Gastrocnemius medialis (tissue), 4 donors: ENCODE measurements at regions of chr19 and their contacts with region 1.

Region 1: DNA sequence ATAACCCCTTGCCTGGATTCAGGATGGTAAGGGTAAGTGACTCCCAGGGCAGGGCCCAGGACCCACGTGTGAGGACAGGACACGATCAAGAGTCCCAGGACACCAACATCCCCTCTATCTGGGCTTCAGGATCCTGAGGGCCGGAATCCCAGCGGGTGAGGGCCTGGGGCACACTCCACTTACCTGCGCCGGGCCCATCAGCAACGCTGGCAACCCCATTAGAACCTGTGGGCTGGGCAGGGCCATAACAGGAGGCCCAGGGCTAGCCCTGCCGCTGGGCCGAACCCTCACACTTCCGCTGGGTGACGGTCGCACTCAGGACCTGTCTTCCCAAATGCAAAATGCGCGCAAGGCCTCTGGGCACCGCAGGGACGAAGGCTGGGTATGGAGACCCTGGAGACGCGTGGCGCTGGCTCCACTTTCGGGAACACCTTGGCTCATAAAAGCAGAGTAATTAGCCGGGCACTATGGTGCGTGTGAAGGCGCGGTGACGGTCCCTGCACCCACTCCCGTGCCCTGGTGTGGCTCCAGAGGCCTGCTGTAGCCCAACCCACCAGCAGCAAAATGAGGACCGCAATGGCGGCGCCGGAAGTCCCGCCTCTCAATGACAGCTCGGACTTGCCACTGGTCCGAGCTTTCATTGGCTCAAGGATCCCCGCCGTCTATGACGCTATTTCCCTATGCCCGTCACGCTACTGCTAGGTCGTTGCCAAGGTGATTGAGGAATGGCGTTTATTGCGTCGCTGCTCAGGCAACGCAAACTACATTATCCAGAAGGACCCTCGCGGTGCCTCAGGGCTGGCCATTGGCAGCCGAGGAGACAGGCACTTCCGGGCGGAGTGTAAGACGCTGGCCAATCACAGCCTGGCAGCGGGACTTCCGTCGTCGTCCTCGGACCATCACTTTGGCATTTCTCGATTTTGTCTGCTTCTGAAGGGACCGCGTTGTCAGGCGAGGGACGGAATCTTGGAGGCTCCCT is at the start of gene ZNF132:
- DNase-seq: peak; percentile 98 to 99
- ATAC-seq: peak; percentile 100
- H3K4me3 ChIP-seq: peak within 1 kb of the TSS; percentile 78 to 95 (median 82)
- H3K27ac ChIP-seq: peak within 1 kb of the TSS; percentile 70 to 87 (median 78)
- H3K4me1 ChIP-seq: peaks cover 16 to 17% of the 10 kb centered on the region in 2 donors
- H3K27me3 ChIP-seq: no peaks in the 10 kb centered on the region
- CTCF ChIP-seq: no peak
- POLR2A ChIP-seq: peak; percentile 38 to 44
- total RNA-seq, gene ZNF132: 1.8 to 2.7 (median 2.4) TPM

Region 2: GRCh38 chr19:57613941-57614743 is 825.7 kb before region 1 on chr19 and contains the start of gene ZNF134:
- in situ Hi-C with region 1: no loop called
- intact Hi-C with region 1: loop called (anchors 1 kb)
- DNase-seq: peak; percentile 82 to 86
- ATAC-seq: peak; percentile 98 to 99
- H3K4me3 ChIP-seq: peak within 1 kb of the TSS; percentile 79 to 98 (median 90)
- H3K27ac ChIP-seq: peak within 1 kb of the TSS; percentile 72 to 85 (median 80)
- H3K4me1 ChIP-seq: peaks cover 14 to 16% of the 10 kb centered on the region in 2 donors
- H3K27me3 ChIP-seq: peaks cover 0 to 3% (median 0%) of the 10 kb centered on the region in 3 donors
- CTCF ChIP-seq: peak in 3 of 5 experiments; percentile 21 to 41 (median 25)
- POLR2A ChIP-seq: peak in 1 of 2 donors; percentile 36
- total RNA-seq, gene ZNF134: 4.2 to 13.1 (median 8.0) TPM

Region 3: DNA sequence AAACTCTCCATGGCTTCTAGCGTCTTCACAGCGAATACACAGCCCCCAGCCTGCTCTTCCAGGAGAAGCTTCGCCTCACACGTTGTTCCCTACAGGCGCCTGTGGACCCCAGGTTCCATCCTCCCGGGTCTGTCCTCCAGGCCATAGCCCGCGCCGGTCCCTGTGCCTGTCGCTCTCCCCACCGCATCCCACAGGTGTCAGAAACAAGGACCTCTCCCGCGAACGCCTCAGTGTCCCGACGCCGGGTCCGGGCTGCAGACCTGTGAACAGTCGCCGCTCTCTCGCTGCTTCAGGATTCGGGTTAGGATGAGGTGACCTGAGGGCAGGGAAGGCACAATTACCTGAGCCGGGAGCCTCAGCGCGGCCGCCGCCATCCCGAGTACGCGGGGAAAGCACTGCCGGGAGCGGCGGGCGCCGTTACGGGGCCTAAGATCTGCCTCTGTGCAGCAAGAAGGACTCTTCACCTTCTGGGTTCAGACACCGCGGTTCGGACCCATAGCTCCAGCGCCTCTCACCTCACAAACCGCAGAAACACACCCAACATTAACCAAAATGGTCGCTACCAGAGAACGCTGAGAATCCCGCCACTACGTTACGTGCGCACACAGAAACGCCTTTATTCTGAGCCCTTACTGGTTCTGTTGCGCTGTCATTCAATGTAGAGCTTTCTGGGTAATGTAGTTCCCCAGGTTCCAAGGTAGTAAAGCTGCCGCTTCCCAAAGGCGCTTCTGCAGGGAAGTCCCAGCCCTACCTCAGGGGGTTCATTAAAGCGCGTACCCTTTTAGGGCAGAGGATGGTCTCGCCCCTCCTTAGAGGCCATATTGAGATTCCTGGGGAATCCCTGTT is 504.8 kb before region 1 on chr19 and contains the start of gene ZNF418:
- in situ Hi-C with region 1: no loop called
- intact Hi-C with region 1: no loop called
- DNase-seq: peak; percentile 25 to 48
- ATAC-seq: peak; percentile 99
- H3K4me3 ChIP-seq: peak within 1 kb of the TSS; percentile 70 to 86 (median 76)
- H3K27ac ChIP-seq: peak within 1 kb of the TSS; percentile 51 to 80 (median 74)
- H3K4me1 ChIP-seq: no peaks in the 10 kb centered on the region
- H3K27me3 ChIP-seq: no peaks in the 10 kb centered on the region
- CTCF ChIP-seq: no peak
- POLR2A ChIP-seq: no peak
- total RNA-seq, gene ZNF418: 0.52 to 2.4 (median 0.87) TPM

Region 4: GRCh38 chr19:58326914-58327726 is 112.7 kb before region 1 on chr19 and contains the start of gene ZSCAN22:
- in situ Hi-C with region 1: no loop called
- intact Hi-C with region 1: loop called (anchors 1 kb)
- DNase-seq: peak; percentile 95 to 96
- ATAC-seq: peak; percentile 98
- H3K4me3 ChIP-seq: peak within 1 kb of the TSS; percentile 91 to 96 (median 94)
- H3K27ac ChIP-seq: peak within 1 kb of the TSS; percentile 94 to 99 (median 98)
- H3K4me1 ChIP-seq: peaks cover 24 to 29% of the 10 kb centered on the region in 2 donors
- H3K27me3 ChIP-seq: no peaks in the 10 kb centered on the region
- CTCF ChIP-seq: no peak
- POLR2A ChIP-seq: peak; percentile 79 to 81
- total RNA-seq, gene ZSCAN22: 1.1 to 2.4 (median 1.8) TPM

Region 5: GRCh38 chr19:58395220-58396029 is 44.4 kb before region 1 on chr19 and contains the start of gene RNF225:
- in situ Hi-C with region 1: no loop called
- intact Hi-C with region 1: no loop called
- DNase-seq: no peak
- ATAC-seq: no peak
- H3K4me3 ChIP-seq: peak within 1 kb of the TSS in 1 of 4 donors; percentile 3
- H3K27ac ChIP-seq: no peak within 1 kb of the TSS
- H3K4me1 ChIP-seq: peaks cover 5 to 7% of the 10 kb centered on the region in 2 donors
- H3K27me3 ChIP-seq: peaks cover 18 to 25% (median 19%) of the 10 kb centered on the region in 3 donors
- CTCF ChIP-seq: no peak
- POLR2A ChIP-seq: no peak
- total RNA-seq, gene RNF225: not detected

Region 6: DNA sequence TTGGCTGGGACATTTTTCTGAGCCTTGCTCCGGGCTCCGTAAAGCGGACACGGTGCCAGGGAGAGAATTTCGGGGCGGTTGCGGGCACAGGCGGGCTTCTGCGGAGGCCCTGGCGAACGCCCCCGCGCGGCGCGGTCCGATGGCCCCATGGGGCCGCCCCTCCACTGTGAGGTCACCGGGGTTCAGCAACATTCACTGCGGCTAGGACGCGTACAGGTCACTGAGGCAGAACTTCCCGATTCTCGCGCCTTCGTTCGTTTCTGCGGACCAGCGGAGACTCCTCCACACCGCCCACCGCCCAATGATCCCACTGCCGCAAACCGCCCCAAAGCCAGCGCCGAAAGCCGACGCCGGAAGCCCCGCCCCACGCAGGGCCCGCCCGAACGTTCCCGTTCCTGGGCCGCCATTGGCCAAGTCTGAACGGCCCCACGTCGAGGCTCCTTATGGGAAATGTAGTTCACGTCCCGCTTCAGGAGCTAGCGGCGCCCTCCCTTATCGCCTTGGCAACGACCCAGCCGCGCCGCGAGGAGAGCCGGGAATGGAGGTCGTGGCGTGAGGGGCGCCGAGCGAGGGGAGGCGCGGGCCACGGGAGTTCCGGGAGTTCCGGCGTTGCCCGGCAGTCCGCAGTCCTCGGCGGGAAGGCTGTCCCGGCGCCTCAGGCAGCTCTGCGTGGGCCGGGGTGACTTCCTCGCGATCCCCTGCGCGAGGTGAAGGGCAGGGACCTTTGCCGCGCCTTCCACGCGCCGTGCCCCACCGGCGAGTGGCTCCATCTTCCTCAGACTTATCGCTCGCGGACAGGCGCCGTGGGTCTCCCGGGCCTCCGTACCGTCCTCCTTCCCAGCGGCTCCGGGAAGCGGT is 31.5 kb before region 1 on chr19 and contains the start of gene ZNF584:
- in situ Hi-C with region 1: no loop called
- intact Hi-C with region 1: loop called (anchors 1 kb)
- DNase-seq: peak; percentile 92 to 94
- ATAC-seq: peak; percentile 99
- H3K4me3 ChIP-seq: peak within 1 kb of the TSS; percentile 58 to 91 (median 84)
- H3K27ac ChIP-seq: peak within 1 kb of the TSS; percentile 86 to 93 (median 88)
- H3K4me1 ChIP-seq: peaks cover 21 to 23% of the 10 kb centered on the region in 2 donors
- H3K27me3 ChIP-seq: no peaks in the 10 kb centered on the region
- CTCF ChIP-seq: peak in 1 of 5 experiments; percentile 5
- POLR2A ChIP-seq: peak; percentile 83 to 89
- total RNA-seq, gene ZNF584: 8.5 to 21.4 (median 10.2) TPM

Region 7: DNA sequence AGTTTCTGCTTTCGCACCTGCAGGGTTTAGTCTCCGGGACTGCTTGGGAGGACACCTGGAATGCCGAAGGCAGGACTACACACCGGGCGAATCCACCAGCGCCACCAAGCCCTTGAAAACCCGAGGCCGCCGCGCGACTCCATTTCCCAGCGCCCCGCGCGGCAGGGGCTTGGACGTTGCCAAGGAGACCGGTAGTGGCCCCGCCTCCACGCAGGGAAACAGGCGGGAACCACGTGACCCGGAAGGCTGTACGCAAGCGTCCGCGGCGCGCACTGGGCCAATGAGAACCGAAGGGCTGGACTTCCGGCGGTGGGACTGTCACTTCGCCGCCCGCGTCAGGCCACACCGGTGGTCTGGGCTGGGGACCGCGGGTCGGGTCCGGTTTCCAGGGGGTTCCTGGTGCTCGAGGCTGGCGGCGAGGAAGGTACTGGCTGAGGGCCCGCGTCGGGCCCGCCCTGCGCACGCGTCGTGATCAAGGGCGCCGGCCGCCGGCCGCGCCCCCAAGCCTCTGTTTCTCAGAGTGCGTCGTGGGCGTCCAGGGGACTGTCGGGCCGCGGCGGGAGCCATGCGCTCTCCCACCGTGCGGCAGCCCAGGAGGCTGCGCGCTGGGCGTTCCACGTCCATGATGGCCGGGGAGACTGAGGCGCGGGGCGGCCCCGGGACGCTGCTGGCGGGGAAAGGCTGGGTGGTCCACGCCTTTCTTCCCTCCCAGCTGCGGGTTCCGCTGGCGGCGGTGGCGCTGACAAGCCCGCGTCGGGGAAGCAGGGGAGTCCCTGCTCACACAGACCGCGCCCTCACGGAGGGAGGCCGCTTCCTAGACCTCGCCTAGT is 27.1 kb after region 1 on chr19 and contains the start of gene ZNF324:
- in situ Hi-C with region 1: no loop called
- intact Hi-C with region 1: loop called (anchors 1 kb)
- DNase-seq: peak; percentile 97
- ATAC-seq: peak; percentile 99
- H3K4me3 ChIP-seq: peak within 1 kb of the TSS; percentile 87 to 100 (median 99)
- H3K27ac ChIP-seq: peak within 1 kb of the TSS; percentile 68 to 92 (median 88)
- H3K4me1 ChIP-seq: peaks cover 10 to 13% of the 10 kb centered on the region in 2 donors
- H3K27me3 ChIP-seq: no peaks in the 10 kb centered on the region
- CTCF ChIP-seq: no peak
- POLR2A ChIP-seq: peak; percentile 63 to 71
- total RNA-seq, gene ZNF324: 8.1 to 11.4 (median 11.3) TPM

Region 8: DNA sequence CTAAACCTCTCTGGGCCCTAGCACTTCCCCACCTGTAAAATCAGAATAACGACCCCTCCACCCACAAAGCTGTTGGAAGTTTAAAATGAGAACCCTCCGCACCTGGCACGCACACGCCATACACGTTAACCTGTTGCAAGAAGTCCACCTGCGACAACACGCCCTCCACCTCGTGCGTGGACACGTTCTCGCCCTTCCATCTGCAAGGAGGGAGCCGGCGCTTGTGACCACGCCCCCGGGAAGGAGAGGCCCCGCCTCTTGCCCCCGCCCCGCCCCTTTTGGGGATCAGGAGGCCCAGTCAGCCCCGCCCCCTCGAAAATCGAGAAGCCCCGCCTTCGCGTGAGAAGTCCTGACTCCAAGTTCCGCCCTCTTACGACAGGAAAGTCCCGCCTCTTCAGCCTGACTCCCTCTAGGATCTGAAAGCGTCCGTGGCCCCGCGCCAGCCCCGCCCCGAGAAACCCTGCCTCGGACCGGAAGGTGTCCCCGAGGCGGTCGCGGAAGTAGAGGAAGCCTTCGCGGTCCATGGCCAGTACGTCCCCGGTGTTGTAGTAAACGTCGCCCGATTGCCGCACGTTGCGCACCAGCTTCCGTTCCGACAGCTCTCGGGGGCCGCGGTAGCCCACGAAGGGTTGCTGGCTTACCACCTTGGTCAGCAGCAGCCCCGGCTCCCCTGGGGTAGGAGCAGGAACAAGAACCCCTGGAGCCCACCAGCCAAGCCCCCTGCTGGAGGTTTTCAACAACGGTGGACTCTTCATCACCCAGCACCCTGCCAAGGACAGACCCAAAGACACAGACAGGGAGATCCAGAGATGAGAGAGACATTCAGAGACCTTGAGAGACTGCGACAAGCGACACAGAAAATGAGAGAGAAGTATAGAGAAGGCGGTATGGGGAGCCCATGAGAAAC is 59.4 kb after region 1 on chr19:
- in situ Hi-C with region 1: no loop called
- intact Hi-C with region 1: no loop called
- DNase-seq: peak; percentile 99 to 100
- ATAC-seq: peak; percentile 99
- H3K4me3 ChIP-seq: peak overlapping the region; percentile 65 to 78 (median 72)
- H3K27ac ChIP-seq: peak overlapping the region; percentile 77 to 87 (median 86)
- H3K4me1 ChIP-seq: peaks cover 12 to 18% of the 10 kb centered on the region in 2 donors
- H3K27me3 ChIP-seq: no peaks in the 10 kb centered on the region
- CTCF ChIP-seq: peak in 4 of 5 experiments; percentile 26 to 52 (median 30)
- POLR2A ChIP-seq: peak; percentile 13 to 30